ENCODE measurements at regions of chr16 and their contacts with region 1.

Region 1: DNA sequence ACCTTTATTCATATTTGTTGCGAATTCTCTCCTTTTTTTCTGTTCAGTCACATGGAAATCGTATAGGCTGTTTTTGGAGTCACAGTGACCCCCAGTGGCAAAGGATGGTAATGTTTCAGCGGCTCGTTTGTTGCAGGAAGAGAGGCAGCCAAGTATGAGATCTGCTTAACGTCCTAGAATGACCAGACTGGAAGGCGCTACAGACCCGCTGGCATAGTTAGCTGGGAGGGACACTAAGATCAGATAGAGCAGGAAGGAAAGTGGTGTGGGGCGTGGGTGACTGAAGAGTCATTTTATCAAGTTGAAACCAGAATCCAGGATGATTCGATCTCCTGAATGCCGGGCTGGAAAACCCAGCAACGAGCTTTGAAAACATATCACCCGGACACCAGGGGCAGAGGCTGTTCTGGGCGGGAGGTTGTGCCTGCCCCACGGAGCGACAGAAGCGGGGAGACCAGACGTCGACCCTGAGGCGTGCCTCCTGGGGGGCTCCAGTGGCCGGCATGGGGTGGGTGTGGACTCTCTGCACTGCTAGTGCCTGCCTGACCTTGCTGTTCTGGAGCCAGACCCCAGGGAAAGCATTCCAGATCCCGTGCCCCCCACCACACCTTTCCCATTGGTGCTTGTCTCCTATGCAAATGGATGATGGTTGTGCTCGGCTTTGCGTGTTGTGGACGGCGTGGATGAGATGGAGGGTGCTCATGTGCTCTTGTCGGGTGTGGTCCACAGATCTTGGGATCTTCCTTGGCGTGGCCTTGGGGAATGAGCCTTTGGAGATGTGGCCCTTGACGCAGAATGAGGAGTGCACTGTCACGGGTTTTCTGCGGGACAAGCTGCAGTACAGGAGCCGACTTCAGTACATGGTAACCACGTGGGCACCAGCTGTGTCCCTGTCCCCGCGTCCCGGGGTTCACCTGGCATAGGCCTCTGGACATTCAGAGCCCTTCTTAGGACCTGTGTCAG is 7.7 kb downstream of the IL34 start:
- DNase-seq: peak; percentile 41 to 78
- ATAC-seq: peak; percentile 80 to 85
- H3K4me3 ChIP-seq: peak overlapping the region; percentile 29; the same call in 2 of the 3 replicates
- H3K27ac ChIP-seq: peak overlapping the region; percentile 57 to 73; a peak in 5 of 6 replicates
- H3K4me1 ChIP-seq: no peaks in the 10 kb centered on the region; the same call in 2 of the 3 replicates
- CTCF ChIP-seq: peak; percentile 94
- EP300 ChIP-seq: no peak
- POLR2A ChIP-seq: no peak
- RAD21 ChIP-seq: peak; percentile 92 to 97

Region 2: DNA sequence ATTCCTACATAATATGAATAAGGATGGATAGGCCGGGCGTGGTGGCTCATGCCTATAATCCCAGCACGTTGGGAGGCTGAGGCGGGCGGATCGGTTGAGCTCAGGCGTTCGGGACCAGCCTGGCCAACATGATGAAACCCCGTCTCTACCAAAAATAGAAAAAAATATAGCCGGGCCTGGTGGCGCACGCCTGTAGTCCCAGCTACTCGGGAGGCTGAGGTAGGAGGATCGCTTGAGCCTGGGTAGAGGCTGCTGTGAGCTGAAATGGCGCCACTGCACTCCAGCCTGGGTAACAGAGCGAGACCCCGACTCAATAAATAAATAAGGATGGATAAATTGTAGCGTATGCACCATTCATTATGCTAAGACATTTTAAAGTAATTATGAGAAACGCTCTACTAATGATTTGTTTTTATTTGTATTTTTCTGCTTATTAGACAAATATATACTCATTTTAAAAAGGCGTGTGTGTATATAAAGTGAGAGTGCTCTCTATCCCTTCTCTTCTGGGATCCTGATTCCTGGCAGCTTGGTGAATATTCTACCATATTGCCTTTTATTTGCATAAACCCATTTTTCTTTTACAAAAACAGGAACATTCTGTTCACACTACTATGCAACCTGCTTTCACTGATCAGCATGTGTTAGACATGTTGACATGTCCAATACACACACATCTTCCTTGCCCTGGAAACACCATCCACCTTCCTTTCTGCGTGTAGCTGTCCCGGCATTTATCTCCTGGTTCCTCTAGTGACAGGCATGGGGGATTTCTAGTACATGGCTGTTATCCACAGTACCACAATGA is 281.0 kb before region 1 on chr16:
- CTCF ChIA-PET with region 1: interaction called, 42 read pairs
- POLR2A ChIA-PET with region 1: no interaction called
- DNase-seq: no peak
- ATAC-seq: no peak
- H3K4me3 ChIP-seq: no peak overlapping the region
- H3K27ac ChIP-seq: no peak overlapping the region
- H3K4me1 ChIP-seq: no peaks in the 10 kb centered on the region
- CTCF ChIP-seq: no peak
- EP300 ChIP-seq: no peak
- POLR2A ChIP-seq: no peak
- RAD21 ChIP-seq: no peak

Region 3: DNA sequence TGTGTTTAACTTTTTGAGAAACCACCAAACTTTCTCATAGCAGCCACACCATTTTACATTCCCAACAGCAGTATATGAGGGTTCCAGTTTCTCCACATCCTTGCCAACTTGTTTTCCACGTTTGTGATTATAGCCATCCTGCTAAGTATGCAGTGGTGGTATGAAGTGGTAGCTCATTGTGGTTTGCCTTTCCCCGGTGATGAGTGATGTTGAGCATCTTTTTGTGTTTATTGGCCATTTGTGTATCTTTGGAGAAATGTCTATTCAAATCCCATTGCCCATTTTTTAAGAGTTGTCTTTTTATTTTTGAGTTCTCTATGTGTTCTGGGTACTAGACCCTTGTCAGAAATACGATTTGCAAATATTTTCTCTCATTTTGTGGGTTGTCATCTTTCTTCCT is 113.1 kb before region 1 on chr16:
- CTCF ChIA-PET with region 1: interaction called, 14 read pairs
- POLR2A ChIA-PET with region 1: no interaction called
- DNase-seq: no peak
- ATAC-seq: no peak
- H3K4me3 ChIP-seq: no peak overlapping the region
- H3K27ac ChIP-seq: no peak overlapping the region
- H3K4me1 ChIP-seq: no peaks in the 10 kb centered on the region
- CTCF ChIP-seq: no peak
- EP300 ChIP-seq: no peak
- POLR2A ChIP-seq: no peak
- RAD21 ChIP-seq: no peak

Region 4: GRCh38 chr16:70679666-70680494 is 25.8 kb after region 1 on chr16:
- CTCF ChIA-PET with region 1: interaction called, 19 read pairs
- POLR2A ChIA-PET with region 1: no interaction called
- DNase-seq: peak in 1 of 2 experiments; percentile 54
- ATAC-seq: peak; percentile 37 to 57; a peak in 3 of 6 replicates
- H3K4me3 ChIP-seq: no peak overlapping the region
- H3K27ac ChIP-seq: peak overlapping the region; percentile 33 to 97; a peak in 3 of 6 replicates
- H3K4me1 ChIP-seq: peaks cover 54% of the 10 kb centered on the region
- CTCF ChIP-seq: peak; percentile 80
- EP300 ChIP-seq: no peak
- POLR2A ChIP-seq: no peak
- RAD21 ChIP-seq: peak; percentile 42 to 89; a peak in 4 of 5 replicates

Measured in A549 (cell line).